Dorsolateral prefrontal cortex (tissue), 120 donors: ENCODE measurements at regions of chr14 and their contacts with region 1.

Region 1: DNA sequence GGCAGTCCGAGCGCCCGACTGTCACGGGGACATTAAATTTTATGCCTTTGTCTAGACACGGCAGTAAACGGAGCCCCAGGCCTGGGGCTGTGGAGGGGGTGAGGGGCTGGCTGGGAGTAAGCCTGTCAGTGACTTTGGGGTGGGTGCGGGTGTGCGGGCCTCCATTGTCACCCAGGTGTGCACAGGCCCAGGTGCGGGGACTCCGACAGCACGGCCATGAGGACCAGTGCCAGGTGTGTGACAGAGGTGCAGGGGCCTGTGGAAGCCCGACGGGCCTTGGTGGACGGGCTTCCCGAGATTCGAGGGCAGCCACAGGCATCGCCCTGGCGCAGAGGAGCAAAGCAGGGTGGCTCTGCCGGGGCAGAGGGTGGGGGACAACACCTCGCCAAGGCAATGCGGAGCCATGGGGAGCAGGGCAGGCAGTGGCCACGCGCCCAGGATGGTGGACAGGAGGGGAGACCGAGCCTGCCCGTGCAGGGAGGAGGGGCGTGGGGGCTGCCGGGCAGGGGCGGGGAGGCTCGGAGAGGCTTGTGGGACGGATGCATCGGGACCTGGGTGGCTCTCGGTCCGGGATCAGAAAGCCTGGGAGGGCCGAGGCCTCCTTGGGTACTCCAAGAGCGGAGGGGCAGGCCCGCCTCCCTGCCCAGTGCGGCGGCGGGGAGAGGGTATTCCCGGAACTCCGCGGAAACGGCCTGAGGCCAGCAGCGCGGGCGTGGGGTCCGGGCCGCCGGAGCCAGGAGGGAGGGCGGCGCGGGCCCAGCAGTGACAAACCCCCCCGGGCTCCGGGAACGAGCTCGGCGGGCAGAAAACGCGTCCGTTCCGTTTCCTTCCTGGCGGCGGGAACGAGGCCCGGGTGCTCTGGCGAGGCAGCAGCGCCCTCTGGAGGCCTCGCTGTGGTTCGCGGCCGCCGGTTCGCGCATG is 1.5 kb downstream of the TMEM121 start:
- DNase-seq: peak; percentile 67 to 88 (median 80)
- H3K4me3 ChIP-seq: peak overlapping the region; percentile 65 to 93 (median 83)
- H3K27ac ChIP-seq: peak overlapping the region; percentile 34 to 95 (median 86)
- H3K27me3 ChIP-seq: no peaks in the 10 kb centered on the region
- CTCF ChIP-seq: peak; percentile 61 to 97 (median 89)

Region 2: DNA sequence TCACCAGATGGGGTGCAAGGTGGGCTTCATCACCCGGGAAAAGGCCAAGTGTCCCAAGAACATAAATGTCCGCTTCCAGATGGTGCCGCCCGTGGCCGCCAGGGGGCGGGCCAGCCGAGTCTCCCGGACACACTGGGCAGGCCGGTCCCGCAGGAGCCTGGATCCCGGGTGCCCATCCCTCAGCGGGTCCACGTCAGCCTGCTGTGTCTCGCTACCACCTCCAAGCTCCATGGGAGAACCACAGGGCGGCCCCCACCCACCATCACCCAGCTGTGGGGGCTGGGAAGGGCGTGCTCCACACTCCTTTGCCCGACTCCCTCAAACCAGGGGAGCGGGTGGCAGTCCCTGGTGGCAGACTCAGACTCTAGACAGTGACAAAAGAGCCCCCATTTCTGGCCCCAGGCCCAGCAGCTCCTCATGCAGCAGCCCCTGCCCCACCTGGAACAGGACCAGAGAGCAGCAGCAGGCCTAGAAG is 324.8 kb before region 1 on chr14:
- intact Hi-C with region 1: loop called in 1 of 2 experiments (anchors 10 kb)
- DNase-seq: peak; percentile 74 to 86 (median 79)
- H3K4me3 ChIP-seq: peak overlapping the region in 1 of 59 donors; percentile 7
- H3K27ac ChIP-seq: peak overlapping the region in 2 of 59 donors; percentile 31 to 44
- H3K27me3 ChIP-seq: peaks cover 0 to 30% (median 0%) of the 10 kb centered on the region in 45 donors
- CTCF ChIP-seq: peak; percentile 85 to 98 (median 93)

Region 3: DNA sequence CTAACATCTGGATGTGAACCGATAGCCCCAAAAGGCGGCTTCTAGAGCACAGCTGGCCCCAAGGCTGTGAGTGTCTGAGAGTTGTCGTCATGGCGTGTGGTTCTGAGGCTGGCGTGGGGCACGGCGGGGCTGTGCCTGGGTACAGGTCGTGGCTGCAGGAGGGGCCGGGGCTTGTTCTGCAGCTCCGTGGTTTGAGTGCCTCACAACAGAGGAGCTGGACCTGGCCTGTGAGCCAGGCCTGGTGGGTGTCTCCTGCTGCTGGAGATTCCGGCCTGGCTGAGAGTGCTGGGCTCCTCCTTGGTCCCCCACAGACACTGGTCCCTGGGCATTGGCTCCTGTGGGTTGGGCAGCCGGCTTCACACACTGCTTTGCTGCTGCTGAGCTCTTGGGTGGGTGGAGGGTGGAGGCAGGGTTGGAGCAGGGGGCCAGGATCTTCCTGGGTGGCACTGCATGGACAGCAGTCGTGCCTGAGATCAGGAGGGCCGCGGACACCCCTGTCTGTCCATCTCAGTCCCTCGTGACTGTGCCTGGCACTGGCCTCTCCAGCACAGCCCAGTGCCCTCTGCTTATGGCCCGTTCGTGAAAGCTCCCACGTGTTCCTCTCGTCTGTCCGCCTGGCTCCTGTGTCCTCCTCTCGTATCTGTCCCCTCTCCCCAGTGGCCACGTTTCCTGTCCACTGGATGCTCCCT is 161.4 kb before region 1 on chr14:
- intact Hi-C with region 1: loop called (anchors 2 to 5 kb)
- DNase-seq: peak in 5 of 10 donors; percentile 32 to 68 (median 60)
- H3K4me3 ChIP-seq: no peak overlapping the region
- H3K27ac ChIP-seq: peak overlapping the region in 52 of 59 donors; percentile 15 to 90 (median 62)
- H3K27me3 ChIP-seq: no peaks in the 10 kb centered on the region
- CTCF ChIP-seq: no peak

Region 4: GRCh38 chr14:105470804-105471610 is 56.9 kb before region 1 on chr14:
- intact Hi-C with region 1: no loop called
- DNase-seq: peak in 1 of 10 donors; percentile 56
- H3K4me3 ChIP-seq: peak overlapping the region in 1 of 59 donors; percentile 3
- H3K27ac ChIP-seq: peak overlapping the region in 57 of 59 donors; percentile 16 to 94 (median 78)
- H3K27me3 ChIP-seq: no peaks in the 10 kb centered on the region
- CTCF ChIP-seq: no peak

Region 5: DNA sequence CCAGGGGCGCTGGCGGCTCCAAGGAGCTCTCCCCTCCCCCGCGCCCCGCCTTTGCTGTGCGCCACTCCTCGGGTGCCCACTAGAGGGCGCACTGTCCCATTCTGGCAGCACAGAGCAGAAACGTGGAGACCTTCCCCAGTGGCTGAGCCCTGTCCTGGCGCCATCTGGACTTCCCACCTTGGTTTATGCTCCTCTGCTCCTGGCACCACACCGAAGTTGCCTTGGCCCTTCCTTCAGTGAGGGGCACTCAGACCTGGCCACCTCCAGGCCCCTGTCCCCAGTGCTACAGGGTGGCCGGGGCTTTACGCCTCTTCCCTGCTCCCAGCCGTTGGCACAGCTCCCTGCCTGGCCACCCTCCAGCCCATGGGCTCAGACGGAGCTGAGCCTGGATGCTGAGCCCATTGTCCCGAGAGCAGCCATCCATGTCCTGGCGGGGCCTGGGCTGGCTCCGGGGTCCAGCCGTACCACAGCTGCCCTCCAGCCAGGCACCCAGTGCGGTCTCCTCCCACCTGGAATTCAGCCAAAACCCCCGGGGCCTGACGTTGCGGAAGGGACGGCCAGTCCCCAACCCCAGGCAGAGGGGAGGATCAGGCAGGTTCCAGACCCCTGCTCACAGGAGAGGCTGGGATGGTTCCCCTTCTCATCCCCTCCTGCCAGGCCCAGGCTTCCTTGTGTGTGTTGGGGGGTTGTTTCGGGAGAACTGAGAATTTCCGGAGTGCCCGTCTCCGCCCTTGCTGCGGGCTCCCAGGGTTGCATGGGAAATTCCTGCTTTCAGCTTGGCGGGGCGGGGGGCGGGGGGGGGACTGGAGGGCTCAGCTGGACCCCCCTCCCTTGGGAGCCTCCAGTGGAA is 46.7 kb before region 1 on chr14:
- intact Hi-C with region 1: loop called (anchors 2 kb)
- DNase-seq: peak; percentile 82 to 91 (median 86)
- H3K4me3 ChIP-seq: peak overlapping the region; percentile 28 to 70 (median 46)
- H3K27ac ChIP-seq: peak overlapping the region; percentile 9 to 95 (median 83)
- H3K27me3 ChIP-seq: peaks cover 0 to 12% (median 3%) of the 10 kb centered on the region in 45 donors
- CTCF ChIP-seq: peak; percentile 91 to 100 (median 99)

Region 6: DNA sequence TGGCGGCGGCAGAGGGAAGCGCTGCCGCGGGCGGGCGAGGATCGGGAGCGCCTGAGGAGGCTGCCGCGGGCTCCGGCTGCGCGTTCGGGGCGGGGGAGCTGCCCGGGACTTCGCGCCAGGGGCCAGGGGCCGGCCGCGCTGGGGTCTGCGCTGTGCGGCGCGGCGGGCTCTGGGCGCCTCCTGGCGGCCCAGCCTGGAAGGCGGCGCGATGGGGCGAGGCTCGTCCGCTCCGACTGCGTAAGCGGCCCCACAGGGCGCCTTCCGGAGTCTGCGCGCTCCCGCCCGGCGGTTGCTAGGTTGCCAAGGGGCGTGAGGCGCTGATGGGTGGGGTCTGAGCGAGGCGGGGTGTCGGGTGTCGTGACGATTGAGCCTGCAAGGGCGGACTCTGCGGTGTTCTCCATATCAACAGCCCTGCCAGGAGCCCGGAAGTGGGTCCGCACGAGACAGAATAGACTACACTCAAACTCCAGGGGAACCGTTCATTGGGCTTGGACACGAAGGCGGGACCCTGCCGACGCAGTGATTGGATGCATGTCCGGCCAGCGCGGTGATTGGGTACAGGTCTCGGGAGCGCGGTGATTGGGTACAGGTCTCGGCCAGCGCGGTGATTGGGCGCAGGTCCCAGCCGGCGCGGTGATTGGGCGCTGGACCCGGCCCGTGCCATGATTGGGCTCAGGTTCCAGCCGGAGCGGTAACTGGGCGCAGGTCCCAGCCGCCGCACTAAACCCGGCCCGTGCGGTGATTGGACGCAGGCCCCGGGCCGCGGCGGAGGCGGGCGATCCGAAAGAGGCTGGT is 37.2 kb before region 1 on chr14 and contains the start of gene TEDC1:
- intact Hi-C with region 1: loop called (anchors 1 to 2 kb)
- DNase-seq: peak; percentile 98 to 100 (median 100)
- H3K4me3 ChIP-seq: peak within 1 kb of the TSS; percentile 59 to 93 (median 78)
- H3K27ac ChIP-seq: peak within 1 kb of the TSS; percentile 29 to 98 (median 93)
- H3K27me3 ChIP-seq: peaks cover 0 to 28% (median 17%) of the 10 kb centered on the region in 45 donors
- CTCF ChIP-seq: peak; percentile 35 to 95 (median 74)
- total RNA-seq, gene TEDC1: 8.9 to 23.4 (median 15.6) TPM

Region 7: GRCh38 chr14:105499256-105500030 is 28.5 kb before region 1 on chr14:
- intact Hi-C with region 1: loop called in 1 of 2 experiments (anchors 2 kb)
- DNase-seq: peak; percentile 37 to 96 (median 91)
- H3K4me3 ChIP-seq: peak overlapping the region in 19 of 59 donors; percentile 3 to 50 (median 23)
- H3K27ac ChIP-seq: peak overlapping the region; percentile 49 to 99 (median 97)
- H3K27me3 ChIP-seq: no peaks in the 10 kb centered on the region
- CTCF ChIP-seq: peak in 7 of 56 donors; percentile 4 to 21 (median 16)

Region 8: GRCh38 chr14:105817971-105818711 is 290.2 kb after region 1 on chr14:
- intact Hi-C with region 1: no loop called
- DNase-seq: no peak
- H3K4me3 ChIP-seq: no peak overlapping the region
- H3K27ac ChIP-seq: no peak overlapping the region
- H3K27me3 ChIP-seq: peaks cover 0 to 86% (median 33%) of the 10 kb centered on the region in 45 donors
- CTCF ChIP-seq: no peak